ENCODE measurements at regions of chr2 and their contacts with region 1.

Region 1: DNA sequence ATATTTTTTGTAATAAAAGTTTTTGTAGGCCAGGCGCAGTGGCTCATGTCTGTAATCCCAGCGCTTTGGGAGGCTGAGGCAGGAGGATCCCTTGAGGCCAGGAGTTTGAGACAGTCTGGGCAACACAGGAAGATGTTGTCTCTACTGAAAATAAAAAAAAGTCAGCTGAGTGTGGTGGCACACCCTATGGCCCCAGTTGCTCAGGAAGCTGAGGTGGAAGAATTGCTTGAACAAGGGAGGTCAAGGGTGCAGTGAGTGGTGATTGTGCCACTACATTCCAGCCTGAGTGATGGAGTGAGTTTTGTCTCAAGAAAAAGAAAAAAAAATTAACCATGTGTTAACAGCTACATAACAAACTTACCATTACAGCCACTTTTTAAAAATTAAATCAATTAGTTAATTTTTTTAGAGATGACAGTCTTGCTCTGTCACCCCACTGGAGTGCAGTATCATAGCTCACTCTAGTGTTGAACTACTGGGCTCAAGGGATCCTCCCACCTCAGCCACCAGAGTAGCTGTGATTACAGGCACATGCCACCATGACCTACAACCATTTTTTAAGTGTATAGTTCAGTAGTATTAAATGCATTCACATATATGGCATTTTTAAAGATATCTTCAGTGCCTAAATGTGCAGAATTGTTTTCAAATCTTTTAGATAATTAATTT is 67.2 kb upstream of the ACYP2 start:
- DNase-seq: no peak
- H3K4me3 Mint-ChIP-seq: no peak overlapping the region
- H3K27ac Mint-ChIP-seq: no peak overlapping the region
- H3K4me1 Mint-ChIP-seq: peaks cover 12% of the 10 kb centered on the region
- H3K27me3 Mint-ChIP-seq: no peaks in the 10 kb centered on the region
- CTCF ChIP-seq: no peak

Region 2: DNA sequence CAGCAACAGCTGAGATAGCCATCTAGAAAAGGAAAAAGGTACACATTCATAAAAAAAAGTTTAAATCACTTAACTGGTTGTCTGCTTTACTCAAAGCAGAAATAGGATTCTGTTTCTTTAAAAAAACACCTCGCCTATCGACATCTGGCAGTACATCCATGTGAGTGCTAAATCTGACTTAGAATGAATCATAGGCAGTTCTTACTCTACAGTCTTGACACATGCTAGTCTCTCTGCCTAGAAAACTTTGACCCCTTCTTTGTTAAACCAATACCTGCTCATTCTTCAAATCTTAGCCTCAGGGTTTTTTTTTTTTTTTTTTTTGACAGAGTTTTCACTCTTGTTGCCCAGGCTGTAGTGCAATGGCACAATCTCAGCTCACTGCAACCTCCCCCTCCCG is 151.4 kb before region 1 on chr2:
- CTCF ChIA-PET with region 1: interaction called, 3 read pairs
- intact Hi-C with region 1: loop called (anchors 10 kb)
- DNase-seq: peak; percentile 6
- H3K4me3 Mint-ChIP-seq: peak overlapping the region; percentile 54
- H3K27ac Mint-ChIP-seq: peak overlapping the region; percentile 91
- H3K4me1 Mint-ChIP-seq: peaks cover 15% of the 10 kb centered on the region
- H3K27me3 Mint-ChIP-seq: no peaks in the 10 kb centered on the region
- CTCF ChIP-seq: no peak